CD8-positive, alpha-beta T cell (primary cell): ENCODE measurements at regions of chr16 and their contacts with region 1.

Region 1: DNA sequence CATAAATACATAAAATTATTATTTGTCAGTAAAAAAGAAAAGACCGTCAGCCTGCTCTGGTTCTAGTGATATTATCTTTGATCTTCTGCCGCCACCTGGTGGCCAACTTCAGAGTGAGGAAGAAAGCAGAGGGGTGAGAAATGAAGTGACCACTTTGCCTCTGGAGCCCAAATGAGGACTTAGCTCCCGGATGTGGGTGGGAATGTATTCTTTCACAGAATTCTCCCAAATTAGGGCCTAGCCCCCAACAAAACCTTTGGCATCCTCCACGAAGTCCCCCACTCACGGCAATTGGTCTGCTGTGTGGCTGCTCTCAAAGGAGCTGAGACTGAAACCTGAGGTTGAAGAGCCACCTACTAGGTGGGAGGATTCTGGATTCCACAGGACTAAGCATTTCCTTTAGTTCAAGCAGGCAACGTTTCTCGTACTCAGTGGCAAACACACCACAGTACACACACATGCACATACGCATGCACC is 4.9 kb upstream of the ZNF267 start:
- DNase-seq: peak; percentile 60 to 88 (median 82)
- ATAC-seq: peak; percentile 20
- H3K4me3 ChIP-seq: peak overlapping the region; percentile 33 to 48
- H3K4me3 Mint-ChIP-seq: peak overlapping the region; percentile 66
- H3K27ac ChIP-seq: peak overlapping the region; percentile 18 to 79
- H3K27ac Mint-ChIP-seq: peak overlapping the region; percentile 88
- H3K4me1 ChIP-seq: peaks cover 31% of the 10 kb centered on the region
- H3K4me1 Mint-ChIP-seq: peaks cover 47% of the 10 kb centered on the region
- H3K27me3 ChIP-seq: no peaks in the 10 kb centered on the region
- H3K27me3 Mint-ChIP-seq: no peaks in the 10 kb centered on the region
- CTCF ChIP-seq: peak; percentile 96

Region 2: DNA sequence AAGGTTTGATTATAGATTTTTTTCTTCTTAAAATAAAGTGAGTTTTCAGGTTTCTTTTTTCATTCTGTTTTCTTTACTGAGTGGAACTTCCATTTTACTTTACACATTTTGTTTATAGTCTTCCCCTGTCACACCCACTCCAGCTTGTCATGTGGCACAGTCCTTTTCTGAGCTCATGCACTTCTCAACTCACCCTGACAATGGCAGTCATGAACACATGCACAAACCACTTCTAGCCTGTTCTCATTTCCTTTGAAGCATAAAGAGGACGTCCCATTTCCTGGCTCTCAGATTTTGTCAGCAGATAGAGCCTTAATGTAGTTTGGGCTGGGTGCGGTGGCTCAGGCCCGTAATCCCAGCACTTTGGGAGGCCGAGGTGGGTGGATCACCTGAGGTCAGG is 173.1 kb before region 1 on chr16:
- CTCF ChIA-PET with region 1: interaction called, 5 read pairs
- POLR2A ChIA-PET with region 1: interaction called, 6 read pairs
- intact Hi-C with region 1: loop called (anchors 1 to 2 kb)
- DNase-seq: peak in 8 of 9 experiments; percentile 25 to 91 (median 60)
- ATAC-seq: peak; percentile 84
- H3K4me3 ChIP-seq: no peak overlapping the region
- H3K4me3 Mint-ChIP-seq: no peak overlapping the region
- H3K27ac ChIP-seq: peak overlapping the region; percentile 36 to 64
- H3K27ac Mint-ChIP-seq: no peak overlapping the region
- H3K4me1 ChIP-seq: peaks cover 23% of the 10 kb centered on the region
- H3K4me1 Mint-ChIP-seq: peaks cover 10% of the 10 kb centered on the region
- H3K27me3 ChIP-seq: no peaks in the 10 kb centered on the region
- H3K27me3 Mint-ChIP-seq: no peaks in the 10 kb centered on the region
- CTCF ChIP-seq: no peak

Region 3: GRCh38 chr16:31785126-31785525 is 83.6 kb before region 1 on chr16:
- CTCF ChIA-PET with region 1: no interaction called
- POLR2A ChIA-PET with region 1: no interaction called
- intact Hi-C with region 1: no loop called
- DNase-seq: no peak
- ATAC-seq: no peak
- H3K4me3 ChIP-seq: no peak overlapping the region
- H3K4me3 Mint-ChIP-seq: no peak overlapping the region
- H3K27ac ChIP-seq: no peak overlapping the region
- H3K27ac Mint-ChIP-seq: no peak overlapping the region
- H3K4me1 ChIP-seq: no peaks in the 10 kb centered on the region
- H3K4me1 Mint-ChIP-seq: no peaks in the 10 kb centered on the region
- H3K27me3 ChIP-seq: no peaks in the 10 kb centered on the region
- H3K27me3 Mint-ChIP-seq: no peaks in the 10 kb centered on the region
- CTCF ChIP-seq: no peak

Region 4: DNA sequence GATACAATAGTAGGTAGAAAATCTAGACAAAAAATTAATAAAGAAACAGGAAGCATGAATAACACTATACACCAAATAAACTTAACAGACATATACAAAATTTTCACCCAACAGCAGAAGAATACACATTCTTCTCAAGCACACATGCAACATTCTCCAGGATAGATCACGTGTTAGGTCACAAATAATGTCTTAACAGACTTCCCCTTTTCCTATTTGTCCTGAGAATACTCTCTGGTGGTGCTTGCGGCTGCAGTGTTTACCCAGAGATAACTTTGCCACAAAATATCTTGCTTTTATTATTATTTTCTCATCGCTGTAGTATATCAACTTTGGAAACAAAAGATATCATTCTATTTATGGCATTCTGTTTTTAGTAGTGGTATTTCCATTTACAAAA is 35.7 kb before region 1 on chr16:
- CTCF ChIA-PET with region 1: no interaction called
- POLR2A ChIA-PET with region 1: no interaction called
- intact Hi-C with region 1: no loop called
- DNase-seq: no peak
- ATAC-seq: no peak
- H3K4me3 ChIP-seq: no peak overlapping the region
- H3K4me3 Mint-ChIP-seq: no peak overlapping the region
- H3K27ac ChIP-seq: no peak overlapping the region
- H3K27ac Mint-ChIP-seq: no peak overlapping the region
- H3K4me1 ChIP-seq: no peaks in the 10 kb centered on the region
- H3K4me1 Mint-ChIP-seq: no peaks in the 10 kb centered on the region
- H3K27me3 ChIP-seq: no peaks in the 10 kb centered on the region
- H3K27me3 Mint-ChIP-seq: no peaks in the 10 kb centered on the region
- CTCF ChIP-seq: no peak